HepG2 (cell line): ENCODE measurements at regions of chr4 and their contacts with region 1.

Region 1: DNA sequence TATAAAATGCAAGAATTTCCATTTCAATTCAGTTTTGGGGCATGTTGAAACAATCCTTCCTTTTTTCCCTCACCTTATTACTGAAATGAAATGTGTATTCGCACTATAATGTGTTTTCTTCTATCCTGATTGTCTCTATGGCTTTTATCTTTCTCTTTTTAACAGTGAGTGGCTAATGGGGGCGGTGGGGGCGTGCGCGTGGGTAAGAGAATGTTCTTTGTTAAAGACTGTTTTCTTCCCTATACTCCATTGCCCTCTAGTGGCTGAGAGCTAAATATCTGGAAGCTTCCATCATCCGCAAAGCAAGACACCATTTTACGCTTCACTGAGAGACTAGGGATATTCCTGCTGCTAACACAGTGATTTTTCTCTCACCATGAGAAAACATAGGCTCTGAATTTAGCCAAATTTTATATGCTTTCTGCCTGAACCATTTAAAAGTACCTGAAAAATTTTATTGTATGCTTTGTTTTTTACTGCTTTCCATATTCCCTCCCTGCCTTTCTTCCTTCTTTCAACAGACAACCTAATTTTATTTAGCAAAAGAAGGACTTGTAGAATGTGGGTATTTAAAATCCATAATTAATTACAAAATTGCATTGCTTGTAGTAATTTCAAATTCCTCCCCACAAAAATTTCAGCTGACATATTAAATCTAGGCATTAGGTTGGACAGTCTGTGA is 194.0 kb downstream of the GASK1B start:
- DNase-seq: peak; percentile 68
- ATAC-seq: peak; percentile 92
- H3K4me3 ChIP-seq: no peak overlapping the region
- H3K27ac ChIP-seq: no peak overlapping the region
- H3K4me1 ChIP-seq: 0 out of 2 replicates have a peak, but pooled peaks cover 6% of the 10 kb centered on the region
- H3K27me3 ChIP-seq: no peaks in the 10 kb centered on the region; a peak in 1 of 5 replicates
- CTCF ChIP-seq: peak; percentile 88
- EP300 ChIP-seq: no peak
- POLR2A ChIP-seq: no peak
- RAD21 ChIP-seq: peak; percentile 85

Region 2: GRCh38 chr4:157220371-157220881 is 758.4 kb before region 1 on chr4 and contains the start of gene GRIA2:
- CTCF ChIA-PET with region 1: interaction called, 25 read pairs
- POLR2A ChIA-PET with region 1: no interaction called
- in situ Hi-C with region 1: loop called (anchors 5 kb)
- intact Hi-C with region 1: loop called (anchors 1 kb)
- DNase-seq: peak; percentile 1
- ATAC-seq: peak; percentile 98
- H3K4me3 ChIP-seq: no peak within 1 kb of the TSS
- H3K27ac ChIP-seq: no peak within 1 kb of the TSS
- H3K4me1 ChIP-seq: no peaks in the 10 kb centered on the region
- H3K27me3 ChIP-seq: peaks cover 0 to 4% of the 10 kb centered on the region in 2 experiments; a peak in 2 of 5 replicates
- CTCF ChIP-seq: no peak
- EP300 ChIP-seq: no peak
- POLR2A ChIP-seq: no peak
- RAD21 ChIP-seq: no peak
- total RNA-seq, gene GRIA2: not detected in 2 replicates

Region 3: GRCh38 chr4:157389741-157390140 is 589.1 kb before region 1 on chr4:
- CTCF ChIA-PET with region 1: no interaction called
- POLR2A ChIA-PET with region 1: no interaction called
- in situ Hi-C with region 1: no loop called
- intact Hi-C with region 1: loop called (anchors 5 kb)
- DNase-seq: no peak
- ATAC-seq: no peak
- H3K4me3 ChIP-seq: no peak overlapping the region
- H3K27ac ChIP-seq: no peak overlapping the region
- H3K4me1 ChIP-seq: no peaks in the 10 kb centered on the region
- H3K27me3 ChIP-seq: no peaks in the 10 kb centered on the region
- CTCF ChIP-seq: no peak
- EP300 ChIP-seq: no peak
- POLR2A ChIP-seq: no peak
- RAD21 ChIP-seq: no peak

Region 4: GRCh38 chr4:157514711-157515110 is 464.1 kb before region 1 on chr4:
- CTCF ChIA-PET with region 1: interaction called, 7 read pairs
- POLR2A ChIA-PET with region 1: no interaction called
- in situ Hi-C with region 1: no loop called
- intact Hi-C with region 1: loop called (anchors 1 kb)
- DNase-seq: peak; percentile 7
- ATAC-seq: peak; percentile 93
- H3K4me3 ChIP-seq: no peak overlapping the region
- H3K27ac ChIP-seq: no peak overlapping the region
- H3K4me1 ChIP-seq: no peaks in the 10 kb centered on the region
- H3K27me3 ChIP-seq: no peaks in the 10 kb centered on the region
- CTCF ChIP-seq: peak; percentile 71
- EP300 ChIP-seq: no peak
- POLR2A ChIP-seq: no peak
- RAD21 ChIP-seq: 0 out of 2 replicates have a peak, but pooled peaks have one; percentile 17

Region 5: DNA sequence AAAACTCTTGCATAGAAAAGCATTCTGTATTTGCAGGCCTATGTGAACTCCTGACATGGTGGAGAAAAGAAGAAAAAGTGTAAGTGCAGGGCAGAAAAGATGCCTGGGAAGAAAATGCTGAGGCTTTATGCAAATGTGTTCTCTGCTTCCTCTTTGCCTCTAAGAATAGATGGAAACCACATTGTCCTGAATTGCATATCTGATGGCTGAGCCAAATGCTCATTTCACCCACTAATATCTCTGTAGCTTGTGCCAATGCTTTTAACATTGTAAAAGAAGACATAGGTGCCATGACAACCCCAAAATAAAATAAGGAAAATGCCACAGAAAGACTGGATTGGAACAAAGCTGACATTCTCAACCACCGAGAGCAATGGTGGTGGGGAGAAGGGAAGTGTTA is 450.9 kb before region 1 on chr4:
- CTCF ChIA-PET with region 1: no interaction called
- POLR2A ChIA-PET with region 1: no interaction called
- in situ Hi-C with region 1: no loop called
- intact Hi-C with region 1: no loop called
- DNase-seq: no peak
- ATAC-seq: no peak
- H3K4me3 ChIP-seq: no peak overlapping the region
- H3K27ac ChIP-seq: no peak overlapping the region
- H3K4me1 ChIP-seq: no peaks in the 10 kb centered on the region
- H3K27me3 ChIP-seq: no peaks in the 10 kb centered on the region
- CTCF ChIP-seq: no peak
- EP300 ChIP-seq: no peak
- POLR2A ChIP-seq: no peak
- RAD21 ChIP-seq: no peak